Breast epithelium (tissue), 4 donors: ENCODE measurements at regions of chr11 and their contacts with region 1.

Region 1: DNA sequence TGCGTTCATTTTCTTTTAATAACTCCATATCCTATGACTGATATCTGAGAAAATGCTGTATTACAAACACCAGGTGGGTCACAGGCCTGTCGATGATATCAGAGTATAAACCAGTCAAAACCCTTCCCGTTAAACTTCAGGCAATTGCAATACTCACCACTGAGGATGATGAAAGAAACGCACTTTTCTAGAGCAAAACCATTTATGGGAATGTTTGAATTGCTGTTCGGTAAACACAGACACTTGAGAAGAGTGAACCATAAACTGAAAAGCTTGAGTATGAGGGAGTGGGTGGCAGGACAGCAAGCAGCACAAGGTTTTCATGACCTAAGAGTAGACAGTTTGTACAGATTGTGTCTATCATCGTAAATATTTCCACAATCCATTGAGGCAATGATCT is 139.8 kb upstream of the CEP126 start:
- DNase-seq: no peak
- H3K4me3 ChIP-seq: no peak overlapping the region
- H3K27ac ChIP-seq: no peak overlapping the region
- H3K4me1 ChIP-seq: no peaks in the 10 kb centered on the region
- H3K27me3 ChIP-seq: no peaks in the 10 kb centered on the region
- CTCF ChIP-seq: no peak
- POLR2A ChIP-seq: no peak

Region 2: DNA sequence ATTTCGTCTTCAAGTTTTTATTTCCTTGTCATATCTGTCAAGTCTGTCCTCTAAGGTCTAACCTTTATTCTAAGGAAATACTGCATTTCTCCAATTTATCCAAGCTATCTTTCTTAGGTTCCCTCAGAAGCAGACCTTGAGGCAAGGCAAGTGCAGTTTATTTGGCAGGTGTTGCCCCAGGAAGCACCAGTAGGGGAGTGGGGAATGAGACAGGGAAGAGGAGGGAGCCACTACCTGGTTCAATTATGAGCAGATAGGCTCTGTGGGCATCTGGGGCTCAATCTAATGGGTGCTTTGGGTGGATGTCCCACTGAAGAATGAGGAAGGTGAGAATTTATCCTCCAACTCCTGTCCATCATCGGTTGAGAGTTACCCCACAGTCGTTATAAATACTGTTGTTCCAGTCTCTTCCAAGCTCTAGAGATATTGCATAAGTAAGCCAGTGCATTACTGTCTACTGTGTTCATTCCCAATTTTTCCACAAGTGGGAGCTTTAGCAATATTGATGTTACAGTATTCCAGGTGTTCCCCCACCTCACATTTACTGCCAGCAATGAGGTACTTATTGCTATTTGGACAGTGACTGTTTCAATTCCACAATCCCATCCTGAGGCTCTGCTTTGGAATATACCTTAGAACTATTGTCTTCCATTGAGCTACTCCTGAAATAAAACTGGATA is 15.1 kb before region 1 on chr11:
- intact Hi-C with region 1: loop called (anchors 1 kb)
- DNase-seq: no peak
- H3K4me3 ChIP-seq: no peak overlapping the region
- H3K27ac ChIP-seq: no peak overlapping the region
- H3K4me1 ChIP-seq: no peaks in the 10 kb centered on the region
- H3K27me3 ChIP-seq: no peaks in the 10 kb centered on the region
- CTCF ChIP-seq: no peak
- POLR2A ChIP-seq: no peak